Prostate gland (tissue), 2 donors: ENCODE measurements at regions of chr6 and their contacts with region 1.

Region 1: GRCh38 chr6:107021446-107022185 is 6.4 kb upstream of the MTRES1 start:
- DNase-seq: no peak
- H3K4me3 ChIP-seq: no peak overlapping the region
- H3K27ac ChIP-seq: no peak overlapping the region
- H3K4me1 ChIP-seq: no peaks in the 10 kb centered on the region
- H3K27me3 ChIP-seq: no peaks in the 10 kb centered on the region
- CTCF ChIP-seq: no peak
- POLR2A ChIP-seq: no peak

Region 2: DNA sequence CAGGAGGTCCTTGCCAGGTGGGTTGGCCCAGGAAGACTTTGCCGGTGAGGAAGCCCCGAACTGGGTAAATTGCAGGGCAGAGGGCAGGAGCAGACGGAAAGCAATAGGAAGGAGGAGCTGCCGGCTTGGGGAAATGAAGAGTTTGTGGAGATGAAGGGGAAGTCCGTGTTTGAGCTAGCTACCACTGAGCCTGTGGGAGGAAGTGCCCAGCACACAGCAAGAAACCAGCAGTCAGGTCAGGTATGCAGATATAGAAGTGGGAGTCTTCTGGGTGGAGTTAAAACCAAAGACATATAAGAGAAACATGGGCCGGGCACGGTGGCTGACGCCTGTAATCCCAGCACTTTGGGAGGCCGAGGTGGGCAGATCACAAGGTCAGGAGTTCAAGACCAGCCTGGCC is 81.8 kb before region 1 on chr6:
- intact Hi-C with region 1: no loop called
- DNase-seq: no peak
- H3K4me3 ChIP-seq: no peak overlapping the region
- H3K27ac ChIP-seq: no peak overlapping the region
- H3K4me1 ChIP-seq: no peaks in the 10 kb centered on the region
- H3K27me3 ChIP-seq: no peaks in the 10 kb centered on the region
- CTCF ChIP-seq: no peak
- POLR2A ChIP-seq: no peak

Region 3: DNA sequence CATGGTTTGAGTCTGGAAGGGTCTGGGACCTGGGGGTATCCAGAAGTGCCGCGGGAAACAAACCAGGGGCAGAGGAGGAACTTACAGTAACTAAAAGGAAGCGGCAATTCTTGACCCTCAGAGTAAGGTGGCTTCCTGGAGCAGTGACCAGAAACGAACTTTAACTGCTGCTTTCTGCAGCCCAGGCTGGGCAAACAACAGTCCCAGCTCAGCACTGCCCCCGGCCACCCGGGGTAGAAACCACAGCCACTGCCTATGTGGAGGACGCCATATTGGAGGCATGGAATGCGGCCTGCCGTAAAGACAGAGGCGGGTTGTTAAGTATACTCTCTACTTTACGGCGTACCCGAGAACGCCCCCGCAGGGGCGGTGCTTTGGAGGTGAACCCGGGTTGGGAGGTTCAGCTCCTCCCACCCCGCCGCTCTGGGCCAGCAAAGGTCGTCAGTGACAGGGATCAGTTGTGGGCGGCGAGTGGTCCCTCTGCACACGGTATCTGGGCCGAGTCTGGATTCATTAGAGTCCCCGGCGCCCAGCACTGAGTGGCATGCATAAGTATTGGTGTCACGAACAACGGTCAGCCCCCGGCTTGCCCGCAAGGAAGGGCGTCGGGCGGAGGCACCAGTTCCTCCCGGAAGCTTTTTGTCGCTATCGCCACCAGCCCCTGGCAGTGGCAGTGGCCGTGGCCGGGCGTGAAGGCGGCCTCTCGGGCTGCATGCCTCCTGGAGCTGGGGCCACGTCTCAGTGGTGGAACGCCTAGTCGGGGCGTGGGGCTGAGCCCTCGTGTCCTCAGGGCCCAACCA is 437.9 kb after region 1 on chr6 and contains the start of gene PDSS2:
- intact Hi-C with region 1: loop called (anchors 10 kb)
- DNase-seq: peak; percentile 98
- H3K4me3 ChIP-seq: peak within 1 kb of the TSS; percentile 69 to 95
- H3K27ac ChIP-seq: peak within 1 kb of the TSS; percentile 80 to 92
- H3K4me1 ChIP-seq: peaks cover 3% of the 10 kb centered on the region
- H3K27me3 ChIP-seq: no peaks in the 10 kb centered on the region
- CTCF ChIP-seq: peak in 2 of 4 experiments; percentile 42 to 53
- POLR2A ChIP-seq: peak; percentile 67
- total RNA-seq, gene PDSS2: 12.7 to 35.3 TPM

Region 4: GRCh38 chr6:107560657-107561056 is 539.0 kb after region 1 on chr6:
- intact Hi-C with region 1: no loop called
- DNase-seq: no peak
- H3K4me3 ChIP-seq: no peak overlapping the region
- H3K27ac ChIP-seq: no peak overlapping the region
- H3K4me1 ChIP-seq: no peaks in the 10 kb centered on the region
- H3K27me3 ChIP-seq: no peaks in the 10 kb centered on the region
- CTCF ChIP-seq: no peak
- POLR2A ChIP-seq: no peak